Caco-2 (cell line): ENCODE measurements at regions of chrX and their contacts with region 1.

Region 1: DNA sequence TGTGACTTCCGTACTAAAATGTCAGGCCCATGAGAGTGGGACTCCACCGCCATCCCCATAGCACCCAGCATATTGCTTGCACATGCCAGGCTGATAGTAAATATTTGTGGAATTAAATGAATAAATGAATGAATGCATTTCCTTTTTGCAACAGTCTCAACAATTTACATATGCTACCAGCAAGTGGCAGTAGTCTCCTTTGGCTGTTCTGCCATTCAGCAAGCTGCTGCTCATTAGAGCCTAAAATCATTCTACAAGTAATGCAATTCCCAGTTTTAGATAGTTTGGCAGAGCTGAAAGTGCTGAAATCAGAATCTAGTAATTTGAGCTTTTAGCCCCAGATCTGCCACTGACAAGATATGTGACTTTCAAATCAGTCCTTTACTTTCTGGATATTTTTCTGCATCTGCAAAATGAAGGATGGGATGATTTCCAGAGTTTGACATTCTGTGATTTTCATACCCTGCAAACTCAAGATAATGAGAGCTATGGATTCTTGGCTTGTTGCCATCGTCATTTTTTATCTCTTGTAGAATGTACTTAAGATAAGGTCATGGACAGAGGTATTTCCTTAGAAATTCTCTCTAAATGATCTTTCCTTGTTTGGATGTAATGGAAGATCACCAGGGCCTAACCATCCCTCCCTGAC is 35.7 kb upstream of the INTS6L start:
- DNase-seq: peak in 1 of 2 experiments; percentile 18
- H3K4me3 ChIP-seq: no peak overlapping the region
- H3K4me3 Mint-ChIP-seq: no peak overlapping the region
- H3K27ac Mint-ChIP-seq: no peak overlapping the region
- H3K4me1 ChIP-seq: no peaks in the 10 kb centered on the region
- H3K4me1 Mint-ChIP-seq: no peaks in the 10 kb centered on the region
- H3K27me3 ChIP-seq: no peaks in the 10 kb centered on the region
- H3K27me3 Mint-ChIP-seq: peaks cover 7% of the 10 kb centered on the region
- CTCF ChIP-seq: peak; percentile 29 to 46

Region 2: GRCh38 chrX:135340831-135341230 is 143.9 kb before region 1 on chrX:
- CTCF ChIA-PET with region 1: no interaction called
- POLR2A ChIA-PET with region 1: no interaction called
- intact Hi-C with region 1: no loop called
- DNase-seq: no peak
- H3K4me3 ChIP-seq: no peak overlapping the region
- H3K4me3 Mint-ChIP-seq: peak overlapping the region; percentile 94
- H3K27ac Mint-ChIP-seq: no peak overlapping the region
- H3K4me1 ChIP-seq: peaks cover 19% of the 10 kb centered on the region
- H3K4me1 Mint-ChIP-seq: peaks cover 33% of the 10 kb centered on the region
- H3K27me3 ChIP-seq: no peaks in the 10 kb centered on the region
- H3K27me3 Mint-ChIP-seq: no peaks in the 10 kb centered on the region
- CTCF ChIP-seq: no peak

Region 3: GRCh38 chrX:135543924-135544323 is 59.2 kb after region 1 on chrX:
- CTCF ChIA-PET with region 1: no interaction called
- POLR2A ChIA-PET with region 1: no interaction called
- intact Hi-C with region 1: no loop called
- DNase-seq: peak in 1 of 2 experiments; percentile 4
- H3K4me3 ChIP-seq: no peak overlapping the region
- H3K4me3 Mint-ChIP-seq: no peak overlapping the region
- H3K27ac Mint-ChIP-seq: no peak overlapping the region
- H3K4me1 ChIP-seq: no peaks in the 10 kb centered on the region
- H3K4me1 Mint-ChIP-seq: no peaks in the 10 kb centered on the region
- H3K27me3 ChIP-seq: no peaks in the 10 kb centered on the region
- H3K27me3 Mint-ChIP-seq: peaks cover 9% of the 10 kb centered on the region
- CTCF ChIP-seq: no peak

Region 4: DNA sequence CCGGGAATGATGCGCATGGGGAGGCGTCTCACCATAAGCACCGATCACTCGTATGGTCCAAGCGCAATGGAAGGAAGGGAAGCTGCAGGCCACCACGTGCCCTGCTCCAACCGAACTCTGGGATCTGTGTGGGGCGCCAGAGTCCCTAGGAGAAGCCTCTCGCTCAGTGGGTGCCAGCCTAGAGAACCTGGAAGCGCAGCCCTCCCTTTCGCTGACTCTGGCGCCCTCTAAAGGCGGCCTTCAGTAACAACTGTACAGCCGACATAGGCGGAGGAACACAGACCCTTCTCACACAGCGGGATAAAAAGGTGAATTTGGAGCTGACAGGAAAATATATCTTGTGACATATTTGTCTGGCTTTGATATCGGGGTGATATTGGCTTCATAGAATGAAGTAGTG is 111.7 kb after region 1 on chrX:
- CTCF ChIA-PET with region 1: no interaction called
- POLR2A ChIA-PET with region 1: no interaction called
- intact Hi-C with region 1: loop called (anchors 1 kb)
- DNase-seq: peak; percentile 13 to 36
- H3K4me3 ChIP-seq: no peak overlapping the region
- H3K4me3 Mint-ChIP-seq: no peak overlapping the region
- H3K27ac Mint-ChIP-seq: no peak overlapping the region
- H3K4me1 ChIP-seq: no peaks in the 10 kb centered on the region
- H3K4me1 Mint-ChIP-seq: no peaks in the 10 kb centered on the region
- H3K27me3 ChIP-seq: no peaks in the 10 kb centered on the region
- H3K27me3 Mint-ChIP-seq: peaks cover 2% of the 10 kb centered on the region
- CTCF ChIP-seq: no peak

Region 5: DNA sequence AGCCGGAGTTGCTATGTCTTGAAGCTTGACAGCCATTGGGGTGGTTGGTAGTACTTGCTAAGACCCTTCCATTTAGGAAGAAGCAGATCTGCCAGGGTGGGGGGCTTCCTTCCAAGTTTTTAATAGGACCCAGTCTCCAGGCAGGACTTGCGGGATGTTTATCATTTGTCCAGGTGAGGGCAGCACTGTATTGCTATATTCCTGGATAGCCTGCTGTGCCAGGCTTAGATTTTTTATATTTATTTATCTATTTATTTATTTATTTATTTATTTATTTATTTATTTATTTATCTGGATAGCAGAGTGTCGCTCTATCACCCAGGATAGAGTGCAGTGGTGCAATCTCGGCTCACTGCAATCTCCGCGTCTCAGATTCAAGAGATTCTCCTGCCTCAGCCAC is 141.2 kb after region 1 on chrX:
- CTCF ChIA-PET with region 1: no interaction called
- POLR2A ChIA-PET with region 1: no interaction called
- intact Hi-C with region 1: loop called (anchors 1 kb)
- DNase-seq: peak in 1 of 2 experiments; percentile 10
- H3K4me3 ChIP-seq: no peak overlapping the region
- H3K4me3 Mint-ChIP-seq: no peak overlapping the region
- H3K27ac Mint-ChIP-seq: no peak overlapping the region
- H3K4me1 ChIP-seq: no peaks in the 10 kb centered on the region
- H3K4me1 Mint-ChIP-seq: no peaks in the 10 kb centered on the region
- H3K27me3 ChIP-seq: no peaks in the 10 kb centered on the region
- H3K27me3 Mint-ChIP-seq: no peaks in the 10 kb centered on the region
- CTCF ChIP-seq: peak in 1 of 2 experiments; percentile 11

Region 6: GRCh38 chrX:135893294-135893817 is 408.6 kb after region 1 on chrX and contains the starts of genes CT45A10 and SAGE1:
- CTCF ChIA-PET with region 1: no interaction called
- POLR2A ChIA-PET with region 1: no interaction called
- intact Hi-C with region 1: no loop called
- DNase-seq: no peak
- H3K4me3 ChIP-seq: no peak within 1 kb of the TSS
- H3K4me3 Mint-ChIP-seq: no peak within 1 kb of the TSS
- H3K27ac Mint-ChIP-seq: no peak within 1 kb of the TSS
- H3K4me1 ChIP-seq: no peaks in the 10 kb centered on the region
- H3K4me1 Mint-ChIP-seq: no peaks in the 10 kb centered on the region
- H3K27me3 ChIP-seq: no peaks in the 10 kb centered on the region
- H3K27me3 Mint-ChIP-seq: no peaks in the 10 kb centered on the region
- CTCF ChIP-seq: no peak
- total RNA-seq, gene CT45A10: not detected in 2 replicates
- total RNA-seq, gene SAGE1: not detected in 2 replicates